HCT116 (cell line): ENCODE measurements at regions of chr6 and their contacts with region 1.

Region 1: GRCh38 chr6:53734473-53735299 is 60.1 kb upstream of the LRRC1 start:
- DNase-seq: peak; percentile 92
- ATAC-seq: peak; percentile 96
- H3K4me3 ChIP-seq: peak overlapping the region; percentile 10 to 30; a peak in 3 of 4 replicates
- H3K27ac ChIP-seq: peak overlapping the region; percentile 96
- H3K4me1 ChIP-seq: peaks cover 63 to 68% of the 10 kb centered on the region in 2 experiments
- H3K27me3 ChIP-seq: no peaks in the 10 kb centered on the region
- CTCF ChIP-seq: peak; percentile 76 to 83 (median 78); a peak in 5 of 6 replicates
- POLR2A ChIP-seq: no peak
- RAD21 ChIP-seq: peak; percentile 56

Region 2: DNA sequence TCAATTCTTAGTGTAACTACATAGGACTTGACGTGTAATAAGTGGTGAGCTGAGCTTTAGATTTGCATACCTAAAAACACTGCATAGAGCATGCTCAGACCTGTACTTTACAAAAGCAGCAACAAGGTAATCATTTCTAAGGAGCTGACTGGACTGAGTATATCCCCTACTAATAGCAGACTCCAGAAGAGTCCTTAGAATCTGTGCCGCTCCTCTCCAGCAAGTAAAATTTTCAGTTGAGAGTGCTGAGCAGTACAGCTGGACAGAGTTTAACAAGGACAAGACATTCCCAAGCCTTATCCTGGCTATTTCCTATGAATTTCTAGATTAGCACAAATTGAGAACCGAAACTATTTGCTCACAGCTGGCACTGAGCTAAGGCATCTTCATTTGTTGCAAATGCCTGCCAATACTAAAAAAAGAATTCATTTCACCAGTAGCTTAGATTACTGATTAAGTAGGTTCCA is 43.0 kb before region 1 on chr6:
- CTCF ChIA-PET with region 1: no interaction called
- POLR2A ChIA-PET with region 1: no interaction called
- RAD21 ChIA-PET with region 1: no interaction called
- intact Hi-C with region 1: no loop called
- DNase-seq: no peak
- ATAC-seq: no peak
- H3K4me3 ChIP-seq: no peak overlapping the region
- H3K27ac ChIP-seq: no peak overlapping the region
- H3K4me1 ChIP-seq: no peaks in the 10 kb centered on the region
- H3K27me3 ChIP-seq: no peaks in the 10 kb centered on the region
- CTCF ChIP-seq: no peak
- POLR2A ChIP-seq: no peak
- RAD21 ChIP-seq: no peak

Region 3: DNA sequence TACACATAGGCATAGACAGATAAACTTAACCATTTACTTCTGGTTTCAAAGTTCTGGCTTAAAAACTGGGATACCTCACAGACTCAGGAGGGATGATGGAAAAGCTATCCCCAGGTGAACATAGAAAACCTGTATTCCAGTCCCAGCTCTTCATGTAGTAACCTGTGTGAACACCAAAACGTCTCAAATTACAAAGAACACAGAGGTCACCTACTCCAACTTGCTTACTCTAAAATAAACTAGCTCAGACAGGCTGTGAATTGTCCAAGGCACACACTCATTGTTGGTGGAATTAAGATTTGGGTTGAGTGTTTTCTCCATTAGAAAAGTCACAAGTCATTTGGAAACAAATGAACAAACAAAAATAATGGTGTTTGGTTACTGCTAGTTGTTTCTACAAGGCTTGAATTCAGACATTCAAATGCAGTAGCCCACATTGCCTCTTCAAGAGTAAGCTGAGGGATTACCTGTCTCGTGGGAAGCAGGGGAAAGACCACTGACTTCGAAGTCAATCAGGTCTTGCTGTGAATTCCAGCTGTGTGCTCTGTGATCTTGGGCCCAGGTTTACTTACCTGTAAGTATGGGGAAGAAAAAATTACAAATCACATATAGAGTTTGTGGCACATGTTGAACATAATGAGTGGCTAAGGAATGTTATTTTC is 11.9 kb after region 1 on chr6:
- CTCF ChIA-PET with region 1: interaction called, 13 read pairs
- POLR2A ChIA-PET with region 1: interaction called, 8 read pairs
- RAD21 ChIA-PET with region 1: interaction called in 1 of 2 experiments, 3 read pairs
- intact Hi-C with region 1: no loop called
- DNase-seq: no peak
- ATAC-seq: peak; percentile 70; the same call in 1 of the 2 replicates
- H3K4me3 ChIP-seq: no peak overlapping the region
- H3K27ac ChIP-seq: no peak overlapping the region
- H3K4me1 ChIP-seq: peaks cover 24 to 29% of the 10 kb centered on the region in 2 experiments
- H3K27me3 ChIP-seq: no peaks in the 10 kb centered on the region
- CTCF ChIP-seq: no peak
- POLR2A ChIP-seq: no peak
- RAD21 ChIP-seq: no peak

Region 4: GRCh38 chr6:53801022-53801421 is 66.3 kb after region 1 on chr6:
- CTCF ChIA-PET with region 1: no interaction called
- POLR2A ChIA-PET with region 1: no interaction called
- RAD21 ChIA-PET with region 1: no interaction called
- intact Hi-C with region 1: no loop called
- DNase-seq: no peak
- ATAC-seq: no peak
- H3K4me3 ChIP-seq: no peak overlapping the region
- H3K27ac ChIP-seq: no peak overlapping the region
- H3K4me1 ChIP-seq: peaks cover 19 to 28% of the 10 kb centered on the region in 2 experiments
- H3K27me3 ChIP-seq: no peaks in the 10 kb centered on the region
- CTCF ChIP-seq: no peak
- POLR2A ChIP-seq: no peak
- RAD21 ChIP-seq: no peak

Region 5: GRCh38 chr6:53956068-53956711 is 221.5 kb after region 1 on chr6:
- CTCF ChIA-PET with region 1: interaction called, 29 read pairs
- POLR2A ChIA-PET with region 1: interaction called, 4 read pairs
- RAD21 ChIA-PET with region 1: interaction called in 1 of 2 experiments, 8 read pairs
- intact Hi-C with region 1: no loop called
- DNase-seq: peak; percentile 72
- ATAC-seq: peak; percentile 99
- H3K4me3 ChIP-seq: no peak overlapping the region
- H3K27ac ChIP-seq: no peak overlapping the region
- H3K4me1 ChIP-seq: peaks cover 0 to 8% of the 10 kb centered on the region in 2 experiments; a peak in 1 of 4 replicates
- H3K27me3 ChIP-seq: no peaks in the 10 kb centered on the region
- CTCF ChIP-seq: peak; percentile 78 to 85 (median 82)
- POLR2A ChIP-seq: no peak
- RAD21 ChIP-seq: peak; percentile 90

Region 6: GRCh38 chr6:54130179-54130578 is 395.5 kb after region 1 on chr6:
- CTCF ChIA-PET with region 1: no interaction called
- POLR2A ChIA-PET with region 1: no interaction called
- RAD21 ChIA-PET with region 1: no interaction called
- intact Hi-C with region 1: no loop called
- DNase-seq: no peak
- ATAC-seq: no peak
- H3K4me3 ChIP-seq: no peak overlapping the region
- H3K27ac ChIP-seq: no peak overlapping the region
- H3K4me1 ChIP-seq: no peaks in the 10 kb centered on the region
- H3K27me3 ChIP-seq: no peaks in the 10 kb centered on the region
- CTCF ChIP-seq: no peak
- POLR2A ChIP-seq: no peak
- RAD21 ChIP-seq: no peak